ENCODE measurements at regions of chr1 and their contacts with region 1.

Region 1: DNA sequence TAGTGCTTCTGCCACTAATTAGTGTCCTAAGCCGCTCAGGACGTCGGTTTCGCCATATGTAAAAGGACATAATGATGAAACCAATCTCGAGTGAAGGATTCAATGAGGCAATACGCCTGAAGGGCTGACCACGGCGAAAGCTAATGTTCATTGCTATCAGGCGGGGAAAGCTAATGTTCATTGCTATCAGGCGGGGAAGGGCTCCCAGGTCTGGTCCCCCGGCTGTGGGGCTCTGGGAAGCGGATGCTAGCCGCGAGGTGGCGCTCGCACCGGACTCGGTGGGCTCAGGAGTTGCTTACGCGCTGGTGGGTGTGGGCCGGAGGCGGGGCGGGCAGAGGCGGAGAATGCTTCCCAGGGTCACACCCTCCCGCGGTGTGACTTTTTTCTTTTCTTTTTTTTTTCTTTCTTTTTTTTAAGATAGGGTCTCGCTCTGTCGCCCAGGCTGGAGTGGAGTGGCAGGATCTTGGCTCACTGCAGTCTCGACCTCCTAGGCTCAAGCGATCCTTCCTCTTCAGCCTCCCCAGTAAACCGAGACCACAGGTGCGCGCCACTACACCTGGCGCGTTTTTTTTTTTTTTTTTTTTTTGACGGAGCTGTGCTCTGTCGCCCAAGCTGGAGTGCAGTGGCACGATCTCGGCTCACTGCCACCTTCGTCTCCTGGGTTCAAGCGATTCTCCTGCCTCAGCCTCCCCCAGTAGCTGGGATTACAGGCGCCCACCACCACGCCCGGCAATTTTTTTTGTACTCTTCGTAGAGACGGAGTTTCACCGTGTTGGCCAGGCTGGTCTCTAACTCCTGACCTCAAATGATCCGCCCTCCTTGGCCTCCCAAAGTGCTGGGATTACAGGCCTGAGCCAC is 1.1 kb upstream of the PEAR1 start:
- DNase-seq: no peak
- H3K4me3 ChIP-seq: peak overlapping the region; percentile 16
- H3K27me3 ChIP-seq: peaks cover 2% of the 10 kb centered on the region; the same call in 1 of the 2 replicates
- CTCF ChIP-seq: peak; percentile 91

Region 2: GRCh38 chr1:156760097-156760803 is 132.2 kb before region 1 on chr1:
- CTCF ChIA-PET with region 1: no interaction called
- POLR2A ChIA-PET with region 1: no interaction called
- DNase-seq: no peak
- H3K4me3 ChIP-seq: no peak overlapping the region
- H3K27me3 ChIP-seq: no peaks in the 10 kb centered on the region
- CTCF ChIP-seq: no peak

Region 3: GRCh38 chr1:156876281-156876680 is 16.1 kb before region 1 on chr1:
- CTCF ChIA-PET with region 1: interaction called, 28 read pairs
- POLR2A ChIA-PET with region 1: no interaction called
- DNase-seq: no peak
- H3K4me3 ChIP-seq: no peak overlapping the region
- H3K27me3 ChIP-seq: peaks cover 19% of the 10 kb centered on the region
- CTCF ChIP-seq: no peak

Region 4: GRCh38 chr1:156910309-156910782 is 17.9 kb after region 1 on chr1:
- CTCF ChIA-PET with region 1: interaction called, 64 read pairs
- POLR2A ChIA-PET with region 1: no interaction called
- DNase-seq: no peak
- H3K4me3 ChIP-seq: no peak overlapping the region
- H3K27me3 ChIP-seq: no peaks in the 10 kb centered on the region
- CTCF ChIP-seq: peak; percentile 84

Region 5: GRCh38 chr1:156920233-156921052 is 28.0 kb after region 1 on chr1 and contains the start of gene LRRC71:
- CTCF ChIA-PET with region 1: interaction called, 298 read pairs
- POLR2A ChIA-PET with region 1: no interaction called
- DNase-seq: no peak
- H3K4me3 ChIP-seq: no peak within 1 kb of the TSS
- H3K27me3 ChIP-seq: peaks cover 20% of the 10 kb centered on the region
- CTCF ChIP-seq: peak; percentile 84
- polyA plus RNA-seq, gene LRRC71: 0.75 and 1.2 TPM in 2 replicates

Region 6: GRCh38 chr1:156927215-156928042 is 35.0 kb after region 1 on chr1:
- CTCF ChIA-PET with region 1: interaction called, 298 read pairs
- POLR2A ChIA-PET with region 1: no interaction called
- DNase-seq: no peak
- H3K4me3 ChIP-seq: peak overlapping the region; percentile 32
- H3K27me3 ChIP-seq: peaks cover 12% of the 10 kb centered on the region
- CTCF ChIP-seq: peak; percentile 89

Region 7: GRCh38 chr1:156948708-156949107 is 56.3 kb after region 1 on chr1:
- CTCF ChIA-PET with region 1: no interaction called
- POLR2A ChIA-PET with region 1: no interaction called
- DNase-seq: no peak
- H3K4me3 ChIP-seq: no peak overlapping the region
- H3K27me3 ChIP-seq: no peaks in the 10 kb centered on the region
- CTCF ChIP-seq: 0 out of 2 replicates have a peak, but pooled peaks have one; percentile 20

Region 8: GRCh38 chr1:157369808-157370521 is 477.5 kb after region 1 on chr1:
- CTCF ChIA-PET with region 1: no interaction called
- POLR2A ChIA-PET with region 1: no interaction called
- DNase-seq: no peak
- H3K4me3 ChIP-seq: no peak overlapping the region
- H3K27me3 ChIP-seq: no peaks in the 10 kb centered on the region
- CTCF ChIP-seq: peak; percentile 86

Region 9: DNA sequence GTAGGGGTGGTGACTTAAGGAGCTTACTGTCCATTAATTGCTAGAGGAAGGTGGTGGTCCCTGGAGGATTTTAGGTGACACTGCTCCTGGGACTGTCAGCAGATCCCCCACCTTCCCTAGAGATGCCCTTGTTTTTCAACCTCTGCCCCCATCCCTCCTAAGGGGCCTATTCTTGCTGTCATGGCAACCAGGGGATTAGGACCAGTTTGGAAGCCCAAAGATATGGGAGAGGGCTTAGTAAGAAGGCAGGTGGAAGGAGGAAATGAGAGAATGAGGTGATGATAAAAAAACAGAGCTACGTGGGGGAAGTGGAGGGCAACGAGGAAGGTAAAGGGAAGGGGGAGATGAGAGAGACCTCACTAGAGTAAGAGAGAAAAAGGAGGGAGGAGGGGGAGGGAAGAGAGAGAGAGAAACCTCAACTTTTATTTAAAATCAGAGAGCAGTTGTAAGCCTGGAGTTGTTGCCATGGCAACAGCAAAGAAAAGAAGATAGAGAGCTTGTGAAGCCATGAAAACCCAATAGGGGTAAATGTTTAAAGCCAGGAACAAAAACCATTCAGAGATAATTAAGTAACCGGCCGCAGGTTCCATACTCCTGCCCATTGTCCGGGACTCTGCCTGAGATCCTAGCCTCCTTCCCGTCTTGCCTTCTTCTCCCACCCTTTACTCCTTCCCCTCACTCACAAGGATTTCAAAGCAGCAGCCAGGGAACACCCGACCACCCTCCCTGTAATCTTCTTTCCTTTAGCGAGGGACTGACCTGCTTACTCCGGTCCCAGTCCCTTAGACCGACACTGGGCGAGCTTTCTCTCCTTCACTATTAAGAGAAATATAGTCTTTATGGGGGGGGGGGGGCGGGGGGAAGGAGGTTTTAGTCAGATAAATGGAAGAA is 1121.7 kb after region 1 on chr1:
- CTCF ChIA-PET with region 1: no interaction called
- POLR2A ChIA-PET with region 1: interaction called, 10 read pairs
- DNase-seq: no peak
- H3K4me3 ChIP-seq: no peak overlapping the region
- H3K27me3 ChIP-seq: no peaks in the 10 kb centered on the region
- CTCF ChIP-seq: no peak